ENCODE measurements at regions of chr6 and their contacts with region 1.

Region 1: DNA sequence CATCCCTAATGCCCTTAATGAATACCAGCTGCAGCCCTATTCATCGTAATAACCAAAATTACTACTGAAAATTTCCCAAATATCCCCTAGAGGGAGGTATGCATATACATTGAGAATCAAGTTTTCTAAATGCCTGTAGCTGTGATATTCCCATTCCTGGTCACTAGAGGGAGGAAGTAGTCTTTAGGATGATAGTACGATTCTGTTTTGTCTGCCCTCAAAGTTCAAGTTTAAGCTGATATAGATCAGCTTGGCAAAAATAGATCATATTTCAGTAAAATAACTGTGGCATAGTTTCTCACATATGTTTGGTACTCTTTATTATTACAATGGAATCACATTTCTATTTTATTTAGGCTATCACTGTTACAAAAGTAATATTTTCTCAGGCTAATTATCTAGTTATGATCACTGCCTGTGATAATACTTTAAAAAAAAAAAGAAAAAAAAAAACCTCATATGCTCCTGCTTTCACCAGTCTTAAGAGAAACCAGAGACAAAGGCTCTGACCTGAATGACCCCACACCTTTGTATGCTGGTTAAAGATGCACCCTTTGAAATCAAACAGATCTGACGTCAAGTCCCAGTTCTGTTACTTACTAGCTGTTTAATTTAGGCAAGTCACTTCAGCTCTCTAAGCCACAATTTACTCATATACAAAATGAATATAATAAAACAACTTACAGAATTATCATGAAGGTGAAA is 11.0 kb downstream of the TSPYL1 start:
- H3K4me3 ChIP-seq: no peak overlapping the region
- H3K27ac ChIP-seq: no peak overlapping the region
- H3K4me1 ChIP-seq: no peaks in the 10 kb centered on the region
- CTCF ChIP-seq: peak; percentile 76

Region 2: DNA sequence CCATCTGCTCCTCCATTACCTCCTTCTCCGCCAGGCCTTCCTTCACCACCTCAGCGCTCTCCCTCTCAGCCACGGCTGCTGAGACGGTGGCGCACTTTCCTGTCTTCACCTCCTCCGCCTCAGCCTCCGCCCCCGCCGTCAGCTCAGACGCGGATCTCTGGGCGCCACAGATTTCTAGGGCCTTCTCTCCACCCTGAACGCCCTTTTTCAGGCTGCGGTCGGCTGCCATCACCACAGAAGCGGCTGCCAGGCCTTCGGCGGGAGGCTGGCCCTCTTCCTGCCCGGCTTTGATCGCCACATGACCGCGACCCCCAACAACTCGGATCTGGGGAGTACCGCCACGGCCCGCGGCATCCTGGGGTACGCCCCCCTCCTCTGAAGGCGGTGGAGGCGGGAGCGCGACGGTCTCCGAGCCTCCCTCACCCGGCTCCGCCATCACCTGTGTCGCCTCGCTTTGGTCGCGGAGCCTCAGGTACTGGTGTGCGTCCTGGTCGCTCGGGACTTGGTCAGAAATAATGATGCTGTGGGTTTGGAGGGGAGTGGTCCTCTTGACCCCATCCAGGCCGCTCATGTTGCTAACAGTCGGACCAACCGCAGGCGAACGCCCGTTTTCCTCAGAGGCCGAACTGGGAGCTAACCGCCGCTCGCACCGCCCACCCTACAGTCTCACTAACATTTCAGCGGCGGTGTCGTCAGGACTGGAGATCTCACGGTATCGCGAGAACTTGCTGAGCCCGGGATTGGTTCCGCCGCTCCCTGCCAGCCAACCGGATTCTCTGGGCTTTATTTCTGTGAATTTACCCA is 10.7 kb after region 1 on chr6 and contains the start of gene TSPYL1:
- CTCF ChIA-PET with region 1: interaction called, 78 read pairs
- POLR2A ChIA-PET with region 1: interaction called, 31 read pairs
- H3K4me3 ChIP-seq: peak within 1 kb of the TSS; percentile 97
- H3K27ac ChIP-seq: peak within 1 kb of the TSS; percentile 94
- H3K4me1 ChIP-seq: peaks cover 4% of the 10 kb centered on the region; the same call in 1 of the 2 replicates
- CTCF ChIP-seq: peak; percentile 87

Region 3: DNA sequence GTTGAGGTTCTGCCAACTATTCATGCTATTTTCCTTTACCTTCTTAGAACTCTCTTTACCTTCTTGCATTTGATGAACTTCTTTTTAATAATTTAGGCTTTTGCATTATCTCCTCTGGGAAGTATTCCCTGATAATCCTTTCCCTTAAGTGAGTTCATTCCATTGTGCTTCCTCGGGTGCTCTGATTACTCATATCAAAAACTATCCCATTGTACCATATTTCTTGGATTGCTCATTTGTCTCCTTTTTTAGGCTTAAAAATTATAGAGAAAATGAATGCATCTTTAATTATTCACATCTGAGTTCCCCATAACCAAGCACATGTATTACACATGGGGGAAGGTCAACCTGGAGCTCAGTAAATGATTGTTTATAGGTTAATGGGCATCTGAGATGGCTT is 287.3 kb after region 1 on chr6:
- CTCF ChIA-PET with region 1: interaction called, 159 read pairs
- POLR2A ChIA-PET with region 1: no interaction called
- H3K4me3 ChIP-seq: no peak overlapping the region
- H3K27ac ChIP-seq: no peak overlapping the region
- H3K4me1 ChIP-seq: peaks cover 4% of the 10 kb centered on the region; the same call in 1 of the 2 replicates
- CTCF ChIP-seq: no peak

Region 4: GRCh38 chr6:116570856-116571682 is 302.3 kb after region 1 on chr6 and contains the start of gene RWDD1:
- CTCF ChIA-PET with region 1: interaction called, 13 read pairs
- POLR2A ChIA-PET with region 1: interaction called, 4 read pairs
- H3K4me3 ChIP-seq: peak within 1 kb of the TSS; percentile 96
- H3K27ac ChIP-seq: peak within 1 kb of the TSS; percentile 85
- H3K4me1 ChIP-seq: peaks cover 2% of the 10 kb centered on the region; the same call in 1 of the 2 replicates
- CTCF ChIP-seq: peak; percentile 40; the same call in 1 of the 2 replicates